Adrenal gland (tissue), 19 donors: ENCODE measurements at regions of chr1 and their contacts with region 1.

Region 1: GRCh38 chr1:159161001-159161718 is 10.3 kb upstream of the CADM3 start:
- DNase-seq: peak; percentile 80 to 91 (median 86)
- H3K4me3 ChIP-seq: no peak overlapping the region
- H3K27ac ChIP-seq: peak overlapping the region in 4 of 5 donors; percentile 64 to 77 (median 69)
- H3K4me1 ChIP-seq: peaks cover 0 to 7% of the 10 kb centered on the region in 2 donors
- H3K27me3 ChIP-seq: peaks cover 18% of the 10 kb centered on the region
- CTCF ChIP-seq: peak; percentile 78 to 100 (median 99)
- POLR2A ChIP-seq: no peak

Region 2: GRCh38 chr1:159197561-159198557 is 36.7 kb after region 1 on chr1:
- intact Hi-C with region 1: loop called (anchors 5 kb)
- DNase-seq: peak; percentile 70 to 94 (median 82)
- H3K4me3 ChIP-seq: no peak overlapping the region
- H3K27ac ChIP-seq: no peak overlapping the region
- H3K4me1 ChIP-seq: no peaks in the 10 kb centered on the region
- H3K27me3 ChIP-seq: no peaks in the 10 kb centered on the region
- CTCF ChIP-seq: peak; percentile 80 to 97 (median 92)
- POLR2A ChIP-seq: no peak

Region 3: GRCh38 chr1:159204161-159205141 is 43.3 kb after region 1 on chr1 and contains the start of gene ACKR1:
- intact Hi-C with region 1: loop called (anchors 5 kb)
- DNase-seq: no peak
- H3K4me3 ChIP-seq: no peak within 1 kb of the TSS
- H3K27ac ChIP-seq: no peak within 1 kb of the TSS
- H3K4me1 ChIP-seq: no peaks in the 10 kb centered on the region
- H3K27me3 ChIP-seq: peaks cover 13% of the 10 kb centered on the region
- CTCF ChIP-seq: no peak
- POLR2A ChIP-seq: no peak
- total RNA-seq, gene ACKR1: 0.11 to 19.9 (median 11.3) TPM